ENCODE measurements at regions of chr14 and their contacts with region 1.

Region 1: DNA sequence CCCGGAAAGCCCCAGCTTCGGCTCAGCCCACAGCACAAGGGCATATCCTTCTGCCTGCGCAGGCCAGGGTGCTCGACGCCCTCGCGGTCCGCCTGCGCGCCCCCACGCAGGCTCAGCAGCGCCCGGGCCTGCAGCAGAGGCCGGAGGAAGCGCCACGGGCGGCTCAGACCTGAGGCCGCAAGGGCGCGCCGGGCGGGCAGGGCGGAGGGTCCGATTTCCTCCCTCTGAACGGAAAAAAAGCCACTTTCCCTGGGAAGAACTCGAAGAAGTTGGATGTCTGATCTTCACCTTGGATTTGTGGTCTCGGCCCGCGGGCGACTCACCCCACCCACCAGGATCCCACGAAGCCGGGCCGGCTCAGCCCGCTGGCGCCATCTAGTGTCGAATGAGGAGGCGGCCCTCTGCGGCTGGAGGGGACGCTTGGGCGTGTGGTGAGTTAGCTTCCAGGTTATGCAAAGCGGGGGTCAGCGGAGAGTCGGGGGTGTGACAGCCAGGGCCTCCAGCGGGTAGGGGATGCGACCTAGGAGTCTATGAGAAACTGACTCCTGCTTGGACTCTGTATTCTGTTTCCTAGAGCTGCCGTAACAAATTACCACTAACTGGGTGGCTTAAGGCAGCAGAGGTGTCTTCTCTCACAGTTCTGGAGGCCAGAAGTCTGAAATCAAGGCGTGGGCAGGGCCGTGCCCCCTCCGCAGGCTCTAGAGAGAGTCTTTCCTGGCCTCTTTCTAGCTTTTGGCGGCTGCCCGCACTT is 40.0 kb upstream of the SRSF5 start:
- DNase-seq: peak; percentile 78
- H3K4me3 ChIP-seq: peak overlapping the region; percentile 51
- H3K27ac ChIP-seq: no peak overlapping the region
- H3K4me1 ChIP-seq: peaks cover 10% of the 10 kb centered on the region
- CTCF ChIP-seq: peak; percentile 98

Region 2: GRCh38 chr14:69247676-69248440 is 479.1 kb before region 1 on chr14:
- CTCF ChIA-PET with region 1: no interaction called
- POLR2A ChIA-PET with region 1: no interaction called
- intact Hi-C with region 1: loop called (anchors 5 kb)
- DNase-seq: peak; percentile 16
- H3K4me3 ChIP-seq: no peak overlapping the region
- H3K27ac ChIP-seq: no peak overlapping the region
- H3K4me1 ChIP-seq: no peaks in the 10 kb centered on the region
- CTCF ChIP-seq: peak; percentile 62

Region 3: GRCh38 chr14:69580009-69580577 is 146.8 kb before region 1 on chr14:
- CTCF ChIA-PET with region 1: no interaction called
- POLR2A ChIA-PET with region 1: no interaction called
- intact Hi-C with region 1: loop called (anchors 1 kb)
- DNase-seq: peak; percentile 57
- H3K4me3 ChIP-seq: no peak overlapping the region
- H3K27ac ChIP-seq: no peak overlapping the region
- H3K4me1 ChIP-seq: peaks cover 7% of the 10 kb centered on the region
- CTCF ChIP-seq: peak; percentile 76

Region 4: GRCh38 chr14:69715725-69716477 is 11.0 kb before region 1 on chr14:
- CTCF ChIA-PET with region 1: no interaction called
- POLR2A ChIA-PET with region 1: no interaction called
- intact Hi-C with region 1: no loop called
- DNase-seq: no peak
- H3K4me3 ChIP-seq: no peak overlapping the region
- H3K27ac ChIP-seq: no peak overlapping the region
- H3K4me1 ChIP-seq: peaks cover 9% of the 10 kb centered on the region
- CTCF ChIP-seq: no peak

Region 5: DNA sequence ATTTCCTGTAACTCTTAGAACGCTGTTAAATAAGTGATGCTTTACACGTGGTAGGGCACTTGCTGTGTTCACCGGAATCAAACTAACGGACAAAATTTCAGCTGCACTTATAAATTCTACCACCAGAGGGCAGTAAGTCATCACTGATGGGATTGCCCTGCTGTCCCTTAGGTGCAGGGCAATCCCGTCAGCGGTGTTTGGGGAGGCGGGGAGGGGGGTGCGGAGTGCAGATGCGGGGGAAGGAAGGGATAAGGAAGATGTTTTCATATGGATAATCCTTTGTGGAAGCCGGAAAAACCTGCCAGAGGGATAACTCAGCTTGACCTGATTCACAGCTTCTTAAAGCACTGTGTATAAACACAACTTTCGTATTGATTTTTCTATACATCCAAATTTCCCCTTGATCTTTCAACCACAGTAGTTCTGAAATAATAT is 91.8 kb after region 1 on chr14:
- CTCF ChIA-PET with region 1: no interaction called
- POLR2A ChIA-PET with region 1: no interaction called
- intact Hi-C with region 1: loop called (anchors 5 kb)
- DNase-seq: peak; percentile 78
- H3K4me3 ChIP-seq: no peak overlapping the region
- H3K27ac ChIP-seq: no peak overlapping the region
- H3K4me1 ChIP-seq: no peaks in the 10 kb centered on the region
- CTCF ChIP-seq: peak; percentile 97

Region 6: GRCh38 chr14:70027785-70028428 is 301.0 kb after region 1 on chr14:
- CTCF ChIA-PET with region 1: no interaction called
- POLR2A ChIA-PET with region 1: no interaction called
- intact Hi-C with region 1: loop called (anchors 5 kb)
- DNase-seq: peak; percentile 54
- H3K4me3 ChIP-seq: no peak overlapping the region
- H3K27ac ChIP-seq: no peak overlapping the region
- H3K4me1 ChIP-seq: no peaks in the 10 kb centered on the region
- CTCF ChIP-seq: peak; percentile 89

Measured in OCI-LY7 (cell line).